Activated CD4-positive, alpha-beta T cell treated with anti-CD3 and anti-CD28 coated beads, Interleukin-2, amount 10 ng/mL, durations not matched to agents 24 days and 14 days (primary cell): ENCODE measurements at regions of chr7 and their contacts with region 1.

Region 1: GRCh38 chr7:84092207-84092606 is 102.4 kb downstream of the SEMA3A start:
- DNase-seq: peak; percentile 82
- H3K4me3 Mint-ChIP-seq: peak overlapping the region; percentile 73
- H3K27ac Mint-ChIP-seq: peak overlapping the region; percentile 68
- H3K4me1 Mint-ChIP-seq: peaks cover 22% of the 10 kb centered on the region
- H3K27me3 Mint-ChIP-seq: no peaks in the 10 kb centered on the region

Region 2: DNA sequence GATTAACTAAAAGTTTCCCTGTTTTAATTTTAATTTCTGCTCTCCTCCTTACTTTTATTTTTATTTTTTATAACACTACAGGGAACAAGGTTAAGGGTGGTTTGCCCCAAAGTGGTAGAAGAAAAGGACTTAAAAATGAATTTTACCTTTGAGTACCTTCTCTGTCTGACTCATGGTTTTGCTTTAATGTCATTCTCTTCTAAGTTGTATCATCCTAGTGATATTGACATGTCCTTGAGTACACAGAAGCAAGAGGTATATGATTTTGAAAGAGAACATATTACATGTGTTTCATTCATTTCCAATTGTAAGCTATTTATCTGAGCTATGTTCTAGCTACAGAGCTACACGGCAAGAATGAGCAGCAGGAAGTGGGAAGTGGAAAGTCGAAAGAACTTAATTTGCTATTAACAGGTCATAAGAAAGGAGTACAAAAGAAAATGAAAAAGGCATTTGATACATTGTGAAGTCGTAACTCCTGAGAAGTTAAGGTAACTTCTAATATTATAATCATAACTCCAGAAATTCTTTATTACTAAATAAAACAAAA is 10.2 kb before region 1 on chr7:
- intact Hi-C with region 1: loop called (anchors 1 kb)
- DNase-seq: no peak
- H3K4me3 Mint-ChIP-seq: peak overlapping the region; percentile 8
- H3K27ac Mint-ChIP-seq: no peak overlapping the region
- H3K4me1 Mint-ChIP-seq: peaks cover 7% of the 10 kb centered on the region
- H3K27me3 Mint-ChIP-seq: no peaks in the 10 kb centered on the region